Mammary epithelial cell (primary cell): ENCODE measurements at regions of chr13 and their contacts with region 1.

Region 1: DNA sequence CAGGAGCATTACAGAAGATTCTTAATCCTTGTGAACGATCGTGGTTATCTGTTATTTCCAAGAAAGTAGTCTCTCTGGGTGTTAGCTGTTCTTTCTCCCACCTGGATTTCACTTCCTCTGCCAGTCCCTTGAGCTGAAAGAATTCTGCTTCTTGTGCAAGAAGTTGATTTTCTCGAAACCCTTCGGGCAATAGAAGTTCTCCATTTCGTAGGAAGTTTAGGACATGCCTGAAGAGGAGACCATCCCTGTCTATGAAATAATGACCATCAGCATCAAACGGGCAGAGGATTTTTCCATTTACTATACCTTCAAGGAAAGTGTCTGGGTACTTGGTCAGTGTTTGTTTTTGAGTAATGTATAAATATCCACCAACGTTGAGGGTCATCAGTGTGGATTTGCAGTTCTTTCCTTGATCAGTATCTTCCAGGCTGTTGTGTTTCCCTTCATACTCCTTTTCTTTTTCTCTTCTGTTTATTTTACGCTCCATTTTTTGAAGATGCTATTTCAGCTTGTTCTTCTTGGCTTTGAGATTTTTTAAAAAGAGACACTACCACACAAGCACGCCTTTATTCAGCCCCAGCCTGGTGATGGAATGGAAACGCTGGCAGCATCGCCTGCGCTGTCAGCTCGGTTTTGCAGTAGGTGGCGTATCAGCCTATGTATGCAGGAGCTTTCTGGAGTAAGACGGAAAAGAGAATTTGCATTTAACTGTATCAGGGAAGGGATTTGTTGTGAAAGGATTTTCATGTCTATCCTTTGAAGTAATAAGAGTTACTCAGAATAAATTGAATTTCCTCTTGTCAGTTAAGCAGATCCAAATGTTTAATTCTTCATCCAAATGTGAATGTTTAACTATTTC is 6.5 kb downstream of the KCTD4 start:
- DNase-seq: peak; percentile 69
- H3K4me3 ChIP-seq: peak overlapping the region; percentile 36 to 94 (median 72)
- H3K27ac ChIP-seq: peak overlapping the region; percentile 68
- H3K4me1 ChIP-seq: peaks cover 59% of the 10 kb centered on the region
- H3K27me3 ChIP-seq: no peaks in the 10 kb centered on the region
- CTCF ChIP-seq: peak; percentile 84 to 88

Region 2: DNA sequence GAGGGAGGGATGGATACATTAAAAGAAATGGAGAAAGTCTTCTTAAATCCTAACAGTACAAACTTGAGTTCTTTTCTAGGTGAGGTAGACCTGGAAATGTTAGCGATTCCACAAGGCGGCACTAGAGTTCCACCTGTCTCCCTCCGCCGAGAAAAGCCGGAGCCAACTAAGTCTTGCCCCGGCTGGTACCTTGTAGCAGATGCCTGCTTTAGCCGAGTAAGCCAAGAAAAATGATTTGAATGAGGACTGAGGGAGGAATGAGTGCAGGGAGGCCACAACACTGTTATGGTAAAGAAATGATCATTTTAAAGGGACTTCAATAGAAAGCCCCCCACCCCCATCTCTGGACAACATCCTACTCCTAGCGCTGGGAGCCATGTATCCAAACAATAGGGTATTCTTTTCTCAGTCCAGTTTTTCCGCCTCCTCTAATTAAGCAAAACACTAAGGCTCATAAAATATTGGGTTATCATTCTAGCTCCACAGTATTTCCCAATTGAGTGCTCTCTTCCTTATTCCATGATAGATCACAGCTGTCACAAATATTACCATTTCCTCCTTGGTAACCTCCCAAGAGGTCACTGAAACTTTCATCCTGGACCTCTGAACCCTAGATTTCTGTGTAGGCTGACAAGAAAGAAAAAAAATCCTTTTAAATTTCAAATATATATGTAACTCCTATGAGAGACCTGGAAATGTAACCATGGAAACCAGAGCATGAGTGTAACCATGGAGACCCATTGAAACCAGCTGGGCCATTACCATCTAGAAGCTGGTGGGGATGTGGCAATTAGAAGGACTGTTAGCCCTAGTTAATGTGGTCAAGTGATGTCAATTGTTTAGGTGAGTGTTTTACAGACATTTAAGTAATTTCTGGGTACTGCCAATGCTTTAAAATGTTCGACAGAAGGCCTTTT is 146.7 kb before region 1 on chr13:
- CTCF ChIA-PET with region 1: no interaction called
- dilution Hi-C with region 1: no loop called
- in situ Hi-C with region 1: loop called in 1 of 2 experiments (anchors 10 kb)
- intact Hi-C with region 1: loop called (anchors 1 kb)
- DNase-seq: peak; percentile 77
- H3K4me3 ChIP-seq: peak overlapping the region; percentile 48 to 59 (median 52)
- H3K27ac ChIP-seq: peak overlapping the region; percentile 16
- H3K4me1 ChIP-seq: peaks cover 9% of the 10 kb centered on the region
- H3K27me3 ChIP-seq: no peaks in the 10 kb centered on the region
- CTCF ChIP-seq: peak; percentile 92 to 94

Region 3: GRCh38 chr13:45132369-45133064 is 61.8 kb before region 1 on chr13:
- CTCF ChIA-PET with region 1: no interaction called
- dilution Hi-C with region 1: no loop called
- in situ Hi-C with region 1: no loop called
- intact Hi-C with region 1: no loop called
- DNase-seq: no peak
- H3K4me3 ChIP-seq: no peak overlapping the region
- H3K27ac ChIP-seq: no peak overlapping the region
- H3K4me1 ChIP-seq: peaks cover 13% of the 10 kb centered on the region
- H3K27me3 ChIP-seq: no peaks in the 10 kb centered on the region
- CTCF ChIP-seq: no peak

Region 4: GRCh38 chr13:45228002-45228401 is 33.7 kb after region 1 on chr13:
- CTCF ChIA-PET with region 1: interaction called, 15 read pairs
- dilution Hi-C with region 1: no loop called
- in situ Hi-C with region 1: no loop called
- intact Hi-C with region 1: no loop called
- DNase-seq: no peak
- H3K4me3 ChIP-seq: no peak overlapping the region
- H3K27ac ChIP-seq: no peak overlapping the region
- H3K4me1 ChIP-seq: peaks cover 9% of the 10 kb centered on the region
- H3K27me3 ChIP-seq: no peaks in the 10 kb centered on the region
- CTCF ChIP-seq: no peak

Region 5: DNA sequence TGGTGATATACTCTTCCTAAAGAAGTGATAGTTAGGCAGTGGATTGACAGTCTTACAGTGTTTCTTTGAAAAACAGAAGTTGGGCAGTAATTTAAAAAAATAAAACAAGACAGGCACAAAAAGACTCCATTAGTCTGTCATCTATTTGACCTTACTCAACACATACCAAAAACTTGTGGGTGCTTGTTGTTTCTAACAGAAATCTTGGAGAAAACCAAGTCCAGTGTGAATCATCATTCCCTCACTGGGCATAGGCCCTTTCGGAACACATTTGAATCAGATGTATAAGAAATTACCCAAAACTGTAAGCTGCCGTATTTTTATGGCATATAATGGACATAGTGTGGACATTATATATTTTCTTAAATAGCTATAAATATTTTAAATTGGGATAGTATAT is 45.1 kb after region 1 on chr13:
- CTCF ChIA-PET with region 1: no interaction called
- dilution Hi-C with region 1: no loop called
- in situ Hi-C with region 1: no loop called
- intact Hi-C with region 1: loop called (anchors 2 kb)
- DNase-seq: peak; percentile 88
- H3K4me3 ChIP-seq: peak overlapping the region in 1 of 3 experiments; percentile 13
- H3K27ac ChIP-seq: peak overlapping the region; percentile 86
- H3K4me1 ChIP-seq: peaks cover 62% of the 10 kb centered on the region
- H3K27me3 ChIP-seq: no peaks in the 10 kb centered on the region
- CTCF ChIP-seq: no peak

Region 6: GRCh38 chr13:45249662-45250061 is 55.4 kb after region 1 on chr13:
- CTCF ChIA-PET with region 1: interaction called, 3 read pairs
- dilution Hi-C with region 1: loop called (anchors 5 kb)
- in situ Hi-C with region 1: no loop called
- intact Hi-C with region 1: no loop called
- DNase-seq: no peak
- H3K4me3 ChIP-seq: no peak overlapping the region
- H3K27ac ChIP-seq: no peak overlapping the region
- H3K4me1 ChIP-seq: peaks cover 10% of the 10 kb centered on the region
- H3K27me3 ChIP-seq: no peaks in the 10 kb centered on the region
- CTCF ChIP-seq: no peak

Region 7: GRCh38 chr13:45280751-45281634 is 86.7 kb after region 1 on chr13:
- CTCF ChIA-PET with region 1: interaction called, 6 read pairs
- dilution Hi-C with region 1: loop called (anchors 5 kb)
- in situ Hi-C with region 1: loop called in 1 of 2 experiments (anchors 10 kb)
- intact Hi-C with region 1: loop called (anchors 1 kb)
- DNase-seq: peak; percentile 84
- H3K4me3 ChIP-seq: no peak overlapping the region
- H3K27ac ChIP-seq: peak overlapping the region; percentile 27
- H3K4me1 ChIP-seq: peaks cover 20% of the 10 kb centered on the region
- H3K27me3 ChIP-seq: no peaks in the 10 kb centered on the region
- CTCF ChIP-seq: peak; percentile 95 to 96

Region 8: GRCh38 chr13:45381196-45381595 is 186.9 kb after region 1 on chr13:
- CTCF ChIA-PET with region 1: no interaction called
- dilution Hi-C with region 1: no loop called
- in situ Hi-C with region 1: no loop called
- intact Hi-C with region 1: no loop called
- DNase-seq: no peak
- H3K4me3 ChIP-seq: no peak overlapping the region
- H3K27ac ChIP-seq: no peak overlapping the region
- H3K4me1 ChIP-seq: no peaks in the 10 kb centered on the region
- H3K27me3 ChIP-seq: no peaks in the 10 kb centered on the region
- CTCF ChIP-seq: no peak

Region 9: DNA sequence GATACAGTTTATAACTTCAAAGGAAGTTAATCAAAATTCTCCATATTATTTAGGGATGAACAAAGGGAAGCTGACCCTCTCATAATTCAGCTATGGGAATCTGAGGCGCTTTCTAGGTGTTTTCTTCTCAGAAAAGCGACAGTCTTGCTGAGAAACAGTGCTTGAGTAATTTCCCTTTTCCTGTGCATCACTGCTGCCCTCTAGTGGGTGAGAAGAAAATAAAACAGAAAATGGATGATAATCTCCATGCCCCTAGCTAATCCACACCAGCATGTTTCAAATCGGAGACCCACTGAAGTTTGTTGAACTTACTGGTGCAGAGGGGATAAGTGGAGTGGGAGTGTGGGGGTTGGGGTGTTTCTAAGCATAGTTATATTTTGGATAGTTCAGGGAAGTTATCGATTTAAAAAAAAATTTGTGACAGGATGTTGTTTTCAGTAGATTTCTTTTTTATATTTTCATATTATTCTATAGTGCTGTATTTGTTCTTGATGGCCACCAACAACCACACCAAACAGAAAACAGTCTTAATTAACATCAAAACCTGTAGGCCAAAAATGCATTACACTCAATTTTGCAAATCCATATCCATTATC is 966.3 kb after region 1 on chr13:
- CTCF ChIA-PET with region 1: no interaction called
- dilution Hi-C with region 1: no loop called
- in situ Hi-C with region 1: no loop called
- intact Hi-C with region 1: no loop called
- DNase-seq: peak; percentile 36
- H3K4me3 ChIP-seq: no peak overlapping the region
- H3K27ac ChIP-seq: no peak overlapping the region
- H3K4me1 ChIP-seq: no peaks in the 10 kb centered on the region
- H3K27me3 ChIP-seq: peaks cover 4% of the 10 kb centered on the region
- CTCF ChIP-seq: peak; percentile 77 to 80